Naive thymus-derived CD4-positive, alpha-beta T cell (primary cell): ENCODE measurements at regions of chr10 and their contacts with region 1.

Region 1: GRCh38 chr10:42933448-42934340 is 143.2 kb upstream of the RET start:
- DNase-seq: peak in 8 of 9 donors; percentile 24 to 81 (median 66)
- ATAC-seq: peak; percentile 66
- H3K4me3 ChIP-seq: peak overlapping the region; percentile 60
- H3K4me3 Mint-ChIP-seq: peak overlapping the region in 9 of 10 donors; percentile 87 to 93 (median 91)
- H3K27ac ChIP-seq: peak overlapping the region; percentile 73
- H3K27ac Mint-ChIP-seq: peak overlapping the region in 7 of 9 donors; percentile 82 to 95 (median 90)
- H3K4me1 ChIP-seq: peaks cover 0 to 12% of the 10 kb centered on the region in 2 donors
- H3K4me1 Mint-ChIP-seq: peaks cover 9 to 25% (median 19%) of the 10 kb centered on the region in 7 donors
- H3K27me3 ChIP-seq: no peaks in the 10 kb centered on the region
- H3K27me3 Mint-ChIP-seq: peaks cover 5 to 38% (median 31%) of the 10 kb centered on the region in 5 donors

Region 2: GRCh38 chr10:42552493-42553407 is 380.9 kb before region 1 on chr10:
- CTCF ChIA-PET with region 1: no interaction called
- POLR2A ChIA-PET with region 1: no interaction called
- intact Hi-C with region 1: loop called in 1 of 2 experiments (anchors 2 kb)
- DNase-seq: peak; percentile 83 to 92 (median 91)
- ATAC-seq: peak; percentile 98
- H3K4me3 ChIP-seq: peak overlapping the region; percentile 95
- H3K4me3 Mint-ChIP-seq: peak overlapping the region; percentile 96 to 100 (median 98)
- H3K27ac ChIP-seq: peak overlapping the region; percentile 87
- H3K27ac Mint-ChIP-seq: peak overlapping the region; percentile 86 to 98 (median 96)
- H3K4me1 ChIP-seq: peaks cover 0 to 16% of the 10 kb centered on the region in 2 donors
- H3K4me1 Mint-ChIP-seq: peaks cover 24 to 49% (median 45%) of the 10 kb centered on the region in 7 donors
- H3K27me3 ChIP-seq: no peaks in the 10 kb centered on the region
- H3K27me3 Mint-ChIP-seq: no peaks in the 10 kb centered on the region

Region 3: GRCh38 chr10:42782446-42783180 is 151.1 kb before region 1 on chr10 and contains the start of gene BMS1:
- CTCF ChIA-PET with region 1: no interaction called
- POLR2A ChIA-PET with region 1: no interaction called
- intact Hi-C with region 1: loop called in 1 of 2 experiments (anchors 1 kb)
- DNase-seq: peak; percentile 78 to 91 (median 86)
- ATAC-seq: peak; percentile 95
- H3K4me3 ChIP-seq: peak within 1 kb of the TSS; percentile 86
- H3K4me3 Mint-ChIP-seq: peak within 1 kb of the TSS; percentile 89 to 100 (median 96)
- H3K27ac ChIP-seq: peak within 1 kb of the TSS; percentile 83
- H3K27ac Mint-ChIP-seq: peak within 1 kb of the TSS; percentile 88 to 98 (median 94)
- H3K4me1 ChIP-seq: peaks cover 0 to 13% of the 10 kb centered on the region in 2 donors
- H3K4me1 Mint-ChIP-seq: peaks cover 10 to 60% (median 45%) of the 10 kb centered on the region in 7 donors
- H3K27me3 ChIP-seq: no peaks in the 10 kb centered on the region
- H3K27me3 Mint-ChIP-seq: peaks cover 0 to 3% (median 0%) of the 10 kb centered on the region in 5 donors
- total RNA-seq, gene BMS1: 9.7 to 20.0 (median 16.9) TPM

Region 4: GRCh38 chr10:42866115-42866995 is 67.3 kb before region 1 on chr10:
- CTCF ChIA-PET with region 1: no interaction called
- POLR2A ChIA-PET with region 1: no interaction called
- intact Hi-C with region 1: loop called in 1 of 2 experiments (anchors 5 kb)
- DNase-seq: peak; percentile 26 to 56 (median 36)
- ATAC-seq: peak; percentile 82
- H3K4me3 ChIP-seq: no peak overlapping the region
- H3K4me3 Mint-ChIP-seq: peak overlapping the region in 5 of 10 donors; percentile 45 to 64 (median 51)
- H3K27ac ChIP-seq: no peak overlapping the region
- H3K27ac Mint-ChIP-seq: no peak overlapping the region
- H3K4me1 ChIP-seq: no peaks in the 10 kb centered on the region
- H3K4me1 Mint-ChIP-seq: peaks cover 0 to 11% (median 7%) of the 10 kb centered on the region in 7 donors
- H3K27me3 ChIP-seq: no peaks in the 10 kb centered on the region
- H3K27me3 Mint-ChIP-seq: peaks cover 27 to 45% (median 43%) of the 10 kb centered on the region in 5 donors

Region 5: GRCh38 chr10:43105102-43105785 is 171.6 kb after region 1 on chr10:
- CTCF ChIA-PET with region 1: no interaction called
- POLR2A ChIA-PET with region 1: no interaction called
- intact Hi-C with region 1: loop called in 1 of 2 experiments (anchors 2 kb)
- DNase-seq: peak; percentile 48 to 91 (median 75)
- ATAC-seq: peak; percentile 95
- H3K4me3 ChIP-seq: peak overlapping the region; percentile 60
- H3K4me3 Mint-ChIP-seq: peak overlapping the region; percentile 61 to 85 (median 76)
- H3K27ac ChIP-seq: no peak overlapping the region
- H3K27ac Mint-ChIP-seq: peak overlapping the region in 1 of 9 donors; percentile 49
- H3K4me1 ChIP-seq: peaks cover 0 to 8% of the 10 kb centered on the region in 2 donors
- H3K4me1 Mint-ChIP-seq: peaks cover 0 to 15% (median 7%) of the 10 kb centered on the region in 7 donors
- H3K27me3 ChIP-seq: no peaks in the 10 kb centered on the region
- H3K27me3 Mint-ChIP-seq: peaks cover 15 to 26% (median 26%) of the 10 kb centered on the region in 5 donors

Region 6: DNA sequence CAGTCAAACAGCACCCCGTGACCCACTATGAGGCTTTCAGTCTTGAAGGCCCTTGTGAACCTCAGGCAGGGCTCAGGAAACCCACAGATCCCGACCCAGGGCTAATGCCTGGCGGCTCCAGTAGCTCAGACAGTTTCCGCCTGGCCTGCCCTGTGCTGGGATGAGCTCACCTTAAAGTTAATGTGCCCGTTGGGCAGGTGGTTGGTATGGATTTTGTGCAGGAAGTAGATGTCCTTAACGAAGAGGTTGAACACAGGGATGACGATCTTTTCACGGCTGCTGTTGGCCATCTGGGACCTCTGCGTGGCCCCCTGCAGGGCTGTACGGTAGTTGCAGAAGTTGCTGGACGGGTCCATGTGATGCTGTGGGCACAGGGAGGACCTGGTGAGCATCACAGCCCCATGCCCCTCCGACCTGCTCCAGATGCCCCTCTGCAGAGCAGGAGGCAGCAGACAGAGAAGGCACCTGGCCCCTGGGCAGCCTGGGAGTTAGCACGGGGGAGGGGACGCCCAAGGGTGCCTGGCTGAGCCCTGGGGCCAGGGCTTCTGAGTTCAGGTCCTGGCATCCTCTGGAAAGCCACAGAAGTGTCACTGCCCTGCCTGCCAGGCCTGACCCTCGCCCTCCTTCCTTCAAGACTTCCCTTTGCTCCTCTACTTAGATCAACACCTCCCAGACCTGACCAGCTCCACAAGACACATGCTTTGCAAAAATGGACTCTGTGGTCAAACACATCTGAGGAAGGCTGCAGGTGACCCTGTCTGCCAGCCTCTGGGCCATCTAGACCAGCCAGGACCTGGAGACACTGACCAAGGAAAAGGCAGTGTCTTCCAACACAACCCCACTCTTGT is 264.4 kb after region 1 on chr10:
- CTCF ChIA-PET with region 1: no interaction called
- POLR2A ChIA-PET with region 1: no interaction called
- intact Hi-C with region 1: loop called in 1 of 2 experiments (anchors 5 kb)
- DNase-seq: no peak
- ATAC-seq: no peak
- H3K4me3 ChIP-seq: no peak overlapping the region
- H3K4me3 Mint-ChIP-seq: no peak overlapping the region
- H3K27ac ChIP-seq: no peak overlapping the region
- H3K27ac Mint-ChIP-seq: peak overlapping the region in 2 of 9 donors; percentile 19 to 49
- H3K4me1 ChIP-seq: peaks cover 0 to 5% of the 10 kb centered on the region in 2 donors
- H3K4me1 Mint-ChIP-seq: peaks cover 0 to 7% (median 5%) of the 10 kb centered on the region in 7 donors
- H3K27me3 ChIP-seq: no peaks in the 10 kb centered on the region
- H3K27me3 Mint-ChIP-seq: no peaks in the 10 kb centered on the region

Region 7: DNA sequence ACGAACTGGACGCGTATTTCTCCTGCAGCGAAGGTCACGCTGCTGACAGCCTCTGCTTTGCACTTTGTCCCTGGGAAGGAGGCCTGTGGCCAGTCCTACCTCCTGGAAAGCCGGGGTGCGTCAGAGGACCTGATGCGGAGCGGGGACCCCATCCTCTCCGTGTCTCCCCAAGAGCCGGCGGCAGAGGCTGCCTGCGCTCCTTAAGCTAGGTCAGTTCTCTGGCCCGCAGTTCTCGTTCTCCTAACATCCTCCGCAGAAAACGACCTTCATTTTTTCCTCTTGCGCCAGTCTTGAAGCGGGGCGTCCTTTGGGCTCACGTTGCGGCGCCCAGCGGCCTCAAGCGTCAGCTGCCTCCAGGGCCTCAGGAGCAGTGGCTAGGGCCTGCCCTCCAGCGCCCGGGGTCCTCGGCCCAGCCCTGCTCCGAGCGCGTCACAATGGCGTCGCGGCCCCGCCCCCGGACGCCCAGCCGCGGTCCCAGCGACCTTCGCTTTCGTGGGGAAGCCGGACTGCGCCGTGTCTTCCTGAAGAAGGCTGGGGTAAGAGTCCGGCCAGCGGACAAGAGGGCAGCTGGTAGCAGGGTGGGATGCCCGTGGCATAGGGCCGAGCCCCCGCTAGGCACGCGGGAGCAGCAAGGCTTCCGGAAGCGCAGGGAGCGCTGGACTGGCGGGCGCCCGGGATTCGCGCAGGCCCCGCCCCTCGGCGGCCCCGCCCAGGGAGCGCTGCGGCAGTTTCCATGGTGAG is 502.9 kb after region 1 on chr10 and contains the start of gene ZNF487:
- CTCF ChIA-PET with region 1: no interaction called
- POLR2A ChIA-PET with region 1: no interaction called
- intact Hi-C with region 1: loop called in 1 of 2 experiments (anchors 5 kb)
- DNase-seq: peak; percentile 87 to 94 (median 92)
- ATAC-seq: peak; percentile 94
- H3K4me3 ChIP-seq: peak within 1 kb of the TSS; percentile 97
- H3K4me3 Mint-ChIP-seq: peak within 1 kb of the TSS; percentile 93 to 99 (median 97)
- H3K27ac ChIP-seq: peak within 1 kb of the TSS; percentile 96
- H3K27ac Mint-ChIP-seq: peak within 1 kb of the TSS; percentile 93 to 100 (median 99)
- H3K4me1 ChIP-seq: peaks cover 5% of the 10 kb centered on the region in 2 donors
- H3K4me1 Mint-ChIP-seq: peaks cover 13 to 39% (median 27%) of the 10 kb centered on the region in 7 donors
- H3K27me3 ChIP-seq: no peaks in the 10 kb centered on the region
- H3K27me3 Mint-ChIP-seq: no peaks in the 10 kb centered on the region
- total RNA-seq, gene ZNF487: 4.1 to 12.0 (median 5.9) TPM